ENCODE measurements at regions of chr2 and their contacts with region 1.

Region 1: GRCh38 chr2:8918412-8918811 is 81.0 kb upstream of the KIDINS220 start:
- DNase-seq: no peak
- H3K27ac ChIP-seq: no peak overlapping the region
- CTCF ChIP-seq: no peak

Region 2: GRCh38 chr2:9077691-9078090 is 159.3 kb after region 1 on chr2:
- CTCF ChIA-PET with region 1: interaction called, 10 read pairs
- POLR2A ChIA-PET with region 1: no interaction called
- DNase-seq: no peak
- H3K27ac ChIP-seq: no peak overlapping the region
- CTCF ChIP-seq: no peak